ENCODE measurements at regions of chr1 and their contacts with region 1.

Region 1: DNA sequence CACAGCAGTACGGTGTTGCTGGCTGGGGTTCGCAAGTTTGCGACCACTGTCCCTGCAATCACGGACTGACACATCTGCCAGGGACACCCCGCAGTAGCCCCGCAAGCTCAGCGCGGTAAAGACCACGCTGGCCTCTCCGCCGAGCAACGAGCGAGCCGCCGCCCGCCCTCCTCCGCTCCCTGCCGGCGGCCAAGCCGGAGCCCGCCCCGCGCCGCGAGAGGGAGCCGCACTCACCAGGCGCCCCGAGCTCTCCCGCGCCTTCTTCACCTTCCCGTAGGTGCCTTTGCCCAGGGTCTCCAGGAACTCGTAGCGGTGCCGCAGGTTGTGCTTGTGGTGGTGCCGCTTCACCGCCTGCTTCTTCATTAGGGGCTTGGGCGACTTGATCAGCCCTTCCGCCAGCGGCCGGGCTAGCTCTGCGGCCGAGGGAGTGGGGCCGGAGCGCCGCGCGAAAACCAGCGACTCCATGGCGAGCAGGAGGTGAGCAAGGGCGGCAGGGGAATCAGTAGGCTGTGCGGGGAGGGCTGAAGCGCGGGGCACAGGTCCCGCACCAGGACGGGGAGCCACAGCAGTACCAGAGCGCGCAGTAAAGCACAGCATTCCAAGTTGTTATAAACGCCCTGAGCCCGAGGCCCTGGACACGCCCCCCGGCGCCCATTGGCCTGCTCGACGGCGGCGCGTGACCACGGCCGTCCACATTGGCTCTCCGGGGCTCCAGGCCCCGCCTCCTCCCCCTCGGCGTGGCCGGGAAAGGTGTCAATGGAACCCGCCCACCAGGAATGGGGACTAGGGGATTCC is at the start of gene NUAK2:
- DNase-seq: peak; percentile 79 to 91
- ATAC-seq: peak; percentile 83 to 92 (median 88)
- H3K4me3 ChIP-seq: peak within 1 kb of the TSS; percentile 98
- H3K4me3 Mint-ChIP-seq: peak within 1 kb of the TSS; percentile 98
- H3K27ac ChIP-seq: peak within 1 kb of the TSS; percentile 70
- H3K27ac Mint-ChIP-seq: peak within 1 kb of the TSS; percentile 94 to 98
- H3K4me1 ChIP-seq: peaks cover 52% of the 10 kb centered on the region
- H3K4me1 Mint-ChIP-seq: peaks cover 65 to 73% of the 10 kb centered on the region in 2 donors
- H3K27me3 ChIP-seq: no peaks in the 10 kb centered on the region
- H3K27me3 Mint-ChIP-seq: peaks cover under 1% of the 10 kb centered on the region in 2 donors
- CTCF ChIP-seq: no peak
- total RNA-seq, gene NUAK2: 17.3 to 21.7 (median 21.5) TPM

Region 2: GRCh38 chr1:205273551-205273982 is 47.8 kb before region 1 on chr1:
- intact Hi-C with region 1: loop called (anchors 1 kb)
- DNase-seq: peak; percentile 83 to 92
- ATAC-seq: peak; percentile 91 to 99 (median 98)
- H3K4me3 ChIP-seq: no peak overlapping the region
- H3K4me3 Mint-ChIP-seq: peak overlapping the region; percentile 37
- H3K27ac ChIP-seq: no peak overlapping the region
- H3K27ac Mint-ChIP-seq: no peak overlapping the region
- H3K4me1 ChIP-seq: peaks cover 37% of the 10 kb centered on the region
- H3K4me1 Mint-ChIP-seq: peaks cover 14 to 18% of the 10 kb centered on the region in 2 donors
- H3K27me3 ChIP-seq: no peaks in the 10 kb centered on the region
- H3K27me3 Mint-ChIP-seq: peaks cover 0 to 6% of the 10 kb centered on the region in 2 donors
- CTCF ChIP-seq: peak; percentile 99

Region 3: GRCh38 chr1:205294175-205294913 is 27.0 kb before region 1 on chr1:
- intact Hi-C with region 1: no loop called
- DNase-seq: no peak
- ATAC-seq: no peak
- H3K4me3 ChIP-seq: no peak overlapping the region
- H3K4me3 Mint-ChIP-seq: no peak overlapping the region
- H3K27ac ChIP-seq: no peak overlapping the region
- H3K27ac Mint-ChIP-seq: peak overlapping the region in 1 of 2 donors; percentile 35
- H3K4me1 ChIP-seq: peaks cover 62% of the 10 kb centered on the region
- H3K4me1 Mint-ChIP-seq: peaks cover 34 to 54% of the 10 kb centered on the region in 2 donors
- H3K27me3 ChIP-seq: no peaks in the 10 kb centered on the region
- H3K27me3 Mint-ChIP-seq: no peaks in the 10 kb centered on the region
- CTCF ChIP-seq: no peak

Region 4: DNA sequence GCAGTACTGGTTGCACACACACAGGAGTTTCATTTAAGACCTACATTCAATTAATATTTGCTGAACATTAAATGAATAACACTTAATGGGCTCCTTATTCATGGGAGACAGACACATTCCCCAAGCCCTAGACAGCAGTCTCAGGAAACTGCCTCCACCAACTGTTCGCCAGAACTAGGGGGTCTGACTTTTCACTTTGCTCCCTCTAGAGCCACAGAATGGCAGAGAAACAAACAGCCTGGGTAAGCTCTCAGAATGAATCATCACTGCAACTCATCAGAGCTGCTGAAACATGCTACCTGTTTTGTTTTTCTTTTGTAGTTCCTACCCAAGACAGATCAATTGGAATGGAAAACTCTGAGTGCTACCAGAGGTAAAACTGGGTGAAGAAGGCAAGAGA is 278.7 kb after region 1 on chr1:
- intact Hi-C with region 1: no loop called
- DNase-seq: no peak
- ATAC-seq: no peak
- H3K4me3 ChIP-seq: no peak overlapping the region
- H3K4me3 Mint-ChIP-seq: no peak overlapping the region
- H3K27ac ChIP-seq: no peak overlapping the region
- H3K27ac Mint-ChIP-seq: peak overlapping the region in 1 of 2 donors; percentile 29
- H3K4me1 ChIP-seq: no peaks in the 10 kb centered on the region
- H3K4me1 Mint-ChIP-seq: peaks cover 0 to 9% of the 10 kb centered on the region in 2 donors
- H3K27me3 ChIP-seq: no peaks in the 10 kb centered on the region
- H3K27me3 Mint-ChIP-seq: no peaks in the 10 kb centered on the region
- CTCF ChIP-seq: no peak